Common myeloid progenitor, CD34-positive (primary cell): ENCODE measurements at regions of chr17 and their contacts with region 1.

Region 1: GRCh38 chr17:74659898-74660297 is 36.4 kb upstream of the CD300E start:
- DNase-seq: no peak
- H3K4me3 ChIP-seq: no peak overlapping the region
- H3K27ac ChIP-seq: no peak overlapping the region
- H3K4me1 ChIP-seq: peaks cover 0 to 13% (median 6%) of the 10 kb centered on the region in 4 experiments
- H3K27me3 ChIP-seq: no peaks in the 10 kb centered on the region

Region 2: DNA sequence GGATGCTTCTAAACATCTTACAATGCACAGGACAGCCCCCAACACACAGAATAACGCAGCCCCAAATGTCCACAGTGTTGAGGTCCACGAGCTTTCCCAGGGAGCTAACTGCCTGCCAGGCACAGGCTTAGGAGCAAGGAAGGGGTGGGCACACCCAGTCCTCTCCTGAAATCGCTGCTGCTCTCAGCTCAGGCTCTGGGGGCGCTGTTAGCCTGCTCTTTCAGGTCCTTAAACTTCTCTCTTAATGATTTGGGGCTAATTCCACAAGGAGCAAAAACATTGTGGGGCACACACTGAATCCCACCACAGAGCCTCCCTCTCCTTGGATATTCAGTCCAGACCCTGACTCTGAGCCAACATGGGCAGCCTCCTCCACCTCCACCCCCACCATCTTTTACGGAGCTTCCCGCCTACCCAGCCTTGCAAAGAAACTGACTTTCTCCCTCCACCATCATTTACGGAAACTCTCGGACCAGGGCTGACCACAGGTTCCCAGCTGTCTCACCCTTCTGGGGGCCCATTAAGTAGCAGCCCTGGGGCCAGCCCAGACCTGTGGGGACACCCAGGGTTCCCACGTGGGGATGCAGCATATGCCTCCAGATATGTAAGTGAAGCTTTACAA is 93.7 kb before region 1 on chr17:
- CTCF ChIA-PET with region 1: interaction called, 15 read pairs
- POLR2A ChIA-PET with region 1: no interaction called
- DNase-seq: peak; percentile 54 to 61 (median 57)
- H3K4me3 ChIP-seq: no peak overlapping the region
- H3K27ac ChIP-seq: no peak overlapping the region
- H3K4me1 ChIP-seq: peaks cover 0 to 36% (median 20%) of the 10 kb centered on the region in 4 experiments
- H3K27me3 ChIP-seq: peaks cover 0 to 8% (median 0%) of the 10 kb centered on the region in 5 experiments

Region 3: GRCh38 chr17:74641224-74641957 is 18.5 kb before region 1 on chr17:
- CTCF ChIA-PET with region 1: no interaction called
- POLR2A ChIA-PET with region 1: no interaction called
- DNase-seq: peak in 2 of 3 donors; percentile 74 to 75
- H3K4me3 ChIP-seq: no peak overlapping the region
- H3K27ac ChIP-seq: no peak overlapping the region
- H3K4me1 ChIP-seq: peaks cover 25 to 67% (median 46%) of the 10 kb centered on the region in 4 experiments
- H3K27me3 ChIP-seq: peaks cover 0 to 20% (median 7%) of the 10 kb centered on the region in 5 experiments

Region 4: GRCh38 chr17:74671031-74671771 is 11.3 kb after region 1 on chr17:
- CTCF ChIA-PET with region 1: interaction called, 25 read pairs
- POLR2A ChIA-PET with region 1: interaction called, 6 read pairs
- DNase-seq: peak; percentile 81 to 93 (median 91)
- H3K4me3 ChIP-seq: no peak overlapping the region
- H3K27ac ChIP-seq: no peak overlapping the region
- H3K4me1 ChIP-seq: peaks cover 0 to 3% (median 3%) of the 10 kb centered on the region in 4 experiments
- H3K27me3 ChIP-seq: peaks cover 0 to 29% (median 19%) of the 10 kb centered on the region in 5 experiments

Region 5: DNA sequence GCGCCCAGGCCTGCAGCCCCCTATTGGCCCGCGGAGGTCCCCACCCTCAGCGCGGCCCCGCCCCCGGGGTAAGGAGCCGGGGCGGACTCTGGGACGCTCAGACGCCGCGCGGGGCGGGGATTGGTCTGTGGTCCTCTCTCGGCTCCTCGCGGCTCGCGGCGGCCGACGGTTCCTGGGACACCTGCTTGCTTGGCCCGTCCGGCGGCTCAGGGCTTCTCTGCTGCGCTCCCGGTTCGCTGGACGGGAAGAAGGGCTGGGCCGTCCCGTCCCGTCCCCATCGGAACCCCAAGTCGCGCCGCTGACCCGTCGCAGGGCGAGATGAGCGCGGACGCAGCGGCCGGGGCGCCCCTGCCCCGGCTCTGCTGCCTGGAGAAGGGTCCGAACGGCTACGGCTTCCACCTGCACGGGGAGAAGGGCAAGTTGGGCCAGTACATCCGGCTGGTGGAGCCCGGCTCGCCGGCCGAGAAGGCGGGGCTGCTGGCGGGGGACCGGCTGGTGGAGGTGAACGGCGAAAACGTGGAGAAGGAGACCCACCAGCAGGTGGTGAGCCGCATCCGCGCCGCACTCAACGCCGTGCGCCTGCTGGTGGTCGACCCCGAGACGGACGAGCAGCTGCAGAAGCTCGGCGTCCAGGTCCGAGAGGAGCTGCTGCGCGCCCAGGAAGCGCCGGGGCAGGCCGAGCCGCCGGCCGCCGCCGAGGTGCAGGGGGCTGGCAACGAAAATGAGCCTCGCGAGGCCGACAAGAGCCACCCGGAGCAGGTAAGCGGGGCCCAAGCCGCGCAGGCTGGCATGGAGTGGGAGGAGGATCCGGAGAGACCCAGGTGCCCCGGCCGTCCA is 88.8 kb after region 1 on chr17 and contains the start of gene NHERF1:
- CTCF ChIA-PET with region 1: interaction called, 27 read pairs
- POLR2A ChIA-PET with region 1: no interaction called
- DNase-seq: peak; percentile 90 to 94 (median 94)
- H3K4me3 ChIP-seq: peak within 1 kb of the TSS; percentile 81 to 98 (median 96)
- H3K27ac ChIP-seq: peak within 1 kb of the TSS; percentile 54 to 81
- H3K4me1 ChIP-seq: peaks cover 18 to 84% (median 80%) of the 10 kb centered on the region in 4 experiments
- H3K27me3 ChIP-seq: no peaks in the 10 kb centered on the region

Region 6: GRCh38 chr17:74770498-74771318 is 110.8 kb after region 1 on chr17:
- CTCF ChIA-PET with region 1: interaction called, 49 read pairs
- POLR2A ChIA-PET with region 1: interaction called, 7 read pairs
- DNase-seq: peak; percentile 51 to 72 (median 66)
- H3K4me3 ChIP-seq: no peak overlapping the region
- H3K27ac ChIP-seq: no peak overlapping the region
- H3K4me1 ChIP-seq: peaks cover 4 to 16% (median 8%) of the 10 kb centered on the region in 4 experiments
- H3K27me3 ChIP-seq: no peaks in the 10 kb centered on the region